ENCODE measurements at regions of chr22 and their contacts with region 1.

Region 1: DNA sequence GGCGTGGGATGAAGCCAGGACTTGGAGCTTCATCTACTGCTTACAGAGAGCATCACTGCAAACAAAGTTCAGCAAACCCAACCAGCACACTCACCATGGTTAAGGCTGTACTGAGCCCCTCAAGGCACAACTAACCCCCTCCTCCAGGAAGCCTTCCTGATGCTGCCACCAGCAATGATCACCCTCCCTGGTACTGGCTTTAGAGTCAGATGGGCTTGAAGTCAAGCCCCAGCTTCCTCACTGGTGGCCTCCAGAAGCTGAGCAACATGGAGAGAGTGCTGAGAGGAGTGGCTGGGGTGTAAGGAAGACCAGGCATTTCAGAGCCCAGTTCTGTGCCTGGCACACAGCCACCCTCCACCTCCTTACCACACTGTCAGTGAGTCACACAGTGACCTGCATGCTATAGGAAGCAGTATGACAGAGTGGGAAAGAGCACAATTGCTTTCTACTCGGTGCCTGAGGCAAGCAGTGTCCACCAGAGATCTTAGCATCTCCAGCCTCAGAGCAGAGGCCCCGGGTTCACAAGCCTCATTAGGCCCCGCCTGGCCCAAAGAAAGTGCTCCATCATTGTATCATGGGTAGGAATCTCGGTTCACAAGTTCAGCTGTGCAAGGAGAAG is 24.8 kb upstream of the BAIAP2L2 start:
- DNase-seq: peak; percentile 77 to 96
- H3K4me3 ChIP-seq: no peak overlapping the region
- H3K27ac ChIP-seq: peak overlapping the region; percentile 79
- H3K4me1 ChIP-seq: peaks cover 20% of the 10 kb centered on the region
- H3K27me3 ChIP-seq: no peaks in the 10 kb centered on the region
- CTCF ChIP-seq: no peak

Region 2: DNA sequence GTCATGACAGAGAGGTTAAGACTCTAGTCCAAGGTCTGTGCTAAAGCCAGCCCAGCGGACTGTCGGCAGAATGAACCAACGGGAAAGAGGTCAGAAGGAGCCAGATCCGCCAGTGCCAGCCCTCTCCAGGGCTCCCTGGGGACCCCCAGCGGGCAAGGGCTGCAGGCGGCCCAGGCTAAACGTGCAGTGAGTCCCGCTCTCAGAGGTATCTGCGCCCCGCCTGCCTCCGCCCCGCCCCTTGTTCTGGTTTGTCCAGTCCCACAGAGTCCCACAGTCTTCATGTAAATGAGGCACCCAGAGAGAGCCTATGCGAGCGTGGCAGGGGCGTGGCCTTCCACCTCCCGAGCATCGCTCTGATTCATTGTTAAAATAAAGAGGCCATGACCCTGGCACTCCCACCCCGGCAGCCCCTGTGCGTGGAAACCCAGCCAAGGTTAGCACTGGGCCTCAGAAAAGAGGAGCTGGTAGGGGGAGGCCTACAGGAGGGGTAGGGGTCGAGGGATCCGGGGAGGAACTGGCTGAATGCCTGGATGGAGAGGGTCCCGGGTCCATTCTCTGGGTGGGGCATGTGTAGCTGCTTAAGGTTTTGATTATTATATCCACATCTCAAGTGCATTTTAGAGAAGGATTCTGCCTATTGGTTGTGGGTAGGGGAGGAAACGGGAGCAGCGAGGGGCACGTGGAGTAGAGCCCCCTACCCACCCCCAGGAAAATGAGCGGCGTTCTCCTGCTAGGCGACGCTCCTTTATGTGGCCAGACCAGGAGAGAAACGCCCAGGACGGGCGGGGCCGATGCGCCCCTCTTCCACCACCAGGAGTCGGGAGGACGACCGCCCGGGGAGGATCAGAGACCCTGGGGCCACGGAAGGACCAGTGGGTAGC is 438.3 kb before region 1 on chr22 and contains the start of gene TRIOBP:
- CTCF ChIA-PET with region 1: no interaction called
- POLR2A ChIA-PET with region 1: no interaction called
- intact Hi-C with region 1: no loop called
- DNase-seq: peak; percentile 97 to 98
- H3K4me3 ChIP-seq: no peak within 1 kb of the TSS; the same call in 1 of the 2 replicates
- H3K27ac ChIP-seq: 0 out of 2 replicates have a peak within 1 kb of the TSS, but pooled peaks have one; percentile 1
- H3K4me1 ChIP-seq: peaks cover 17% of the 10 kb centered on the region
- H3K27me3 ChIP-seq: no peaks in the 10 kb centered on the region
- CTCF ChIP-seq: peak; percentile 61; the same call in 1 of the 2 replicates
- total RNA-seq, gene TRIOBP: 170 and 172 TPM in 2 replicates

Region 3: GRCh38 chr22:37832022-37832857 is 303.0 kb before region 1 on chr22:
- CTCF ChIA-PET with region 1: no interaction called
- POLR2A ChIA-PET with region 1: no interaction called
- intact Hi-C with region 1: no loop called
- DNase-seq: no peak
- H3K4me3 ChIP-seq: no peak overlapping the region
- H3K27ac ChIP-seq: no peak overlapping the region
- H3K4me1 ChIP-seq: no peaks in the 10 kb centered on the region
- H3K27me3 ChIP-seq: no peaks in the 10 kb centered on the region
- CTCF ChIP-seq: no peak

Region 4: DNA sequence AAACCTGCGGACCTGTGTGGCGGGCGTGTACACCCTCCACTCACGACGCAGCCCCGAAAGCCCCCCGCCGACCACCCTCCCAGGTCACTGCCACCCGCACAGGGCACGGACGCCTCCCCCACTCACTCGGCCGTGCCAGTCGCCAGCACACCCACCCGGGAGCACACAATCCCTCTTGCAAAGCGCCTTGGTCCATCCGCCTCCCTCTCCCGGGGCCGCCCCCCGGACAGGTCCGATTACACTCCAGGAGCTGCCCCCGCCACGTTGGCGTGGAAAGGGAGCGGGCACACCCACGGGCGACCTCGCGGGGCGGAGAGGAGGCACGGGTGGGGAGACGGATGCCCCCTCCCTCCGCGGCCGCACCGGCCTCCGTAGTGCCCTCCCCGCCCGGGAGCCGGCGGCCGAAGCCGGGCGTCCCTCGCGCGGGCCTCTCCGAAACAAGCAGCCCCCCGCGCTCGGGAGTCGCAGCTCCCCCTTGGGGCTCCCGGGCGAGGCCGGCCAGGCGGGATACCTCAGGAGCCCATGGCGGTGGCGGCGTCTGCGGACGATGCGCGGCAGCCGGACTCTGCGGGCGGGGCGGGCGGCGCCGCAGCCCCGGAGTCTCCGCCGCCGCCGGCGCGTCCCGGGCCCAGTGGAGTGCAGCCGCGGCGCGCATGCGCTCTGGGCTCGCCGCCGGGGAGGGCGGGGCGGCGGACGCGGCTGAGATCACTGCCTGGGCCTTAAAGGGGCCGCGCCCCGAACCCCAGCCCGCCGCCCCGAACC is 137.3 kb after region 1 on chr22 and contains the start of gene TMEM184B:
- CTCF ChIA-PET with region 1: no interaction called
- POLR2A ChIA-PET with region 1: interaction called, 25 read pairs
- intact Hi-C with region 1: no loop called
- DNase-seq: peak in 1 of 2 experiments; percentile 86
- H3K4me3 ChIP-seq: peak within 1 kb of the TSS; percentile 90
- H3K27ac ChIP-seq: peak within 1 kb of the TSS; percentile 62
- H3K4me1 ChIP-seq: peaks cover 41% of the 10 kb centered on the region
- H3K27me3 ChIP-seq: no peaks in the 10 kb centered on the region
- CTCF ChIP-seq: no peak
- total RNA-seq, gene TMEM184B: 185 and 192 TPM in 2 replicates

Region 5: GRCh38 chr22:39028281-39028680 is 893.0 kb after region 1 on chr22:
- CTCF ChIA-PET with region 1: no interaction called
- POLR2A ChIA-PET with region 1: interaction called, 26 read pairs
- intact Hi-C with region 1: no loop called
- DNase-seq: no peak
- H3K4me3 ChIP-seq: no peak overlapping the region
- H3K27ac ChIP-seq: no peak overlapping the region
- H3K4me1 ChIP-seq: peaks cover 7% of the 10 kb centered on the region; the same call in 1 of the 2 replicates
- H3K27me3 ChIP-seq: no peaks in the 10 kb centered on the region
- CTCF ChIP-seq: no peak

Measured in PC-9 (cell line).